Esophagus squamous epithelium (tissue), 5 donors: ENCODE measurements at regions of chr11 and their contacts with region 1.

Region 1: GRCh38 chr11:65013692-65014145 is 241 bp upstream of the ARL2 start:
- DNase-seq: peak; percentile 43
- H3K4me3 ChIP-seq: peak overlapping the region; percentile 73 to 99 (median 96)
- H3K27ac ChIP-seq: peak overlapping the region; percentile 98 to 100 (median 99)
- H3K4me1 ChIP-seq: peaks cover 17 to 38% (median 19%) of the 10 kb centered on the region in 3 donors
- H3K27me3 ChIP-seq: no peaks in the 10 kb centered on the region
- CTCF ChIP-seq: peak in 2 of 6 experiments; percentile 32 to 93
- POLR2A ChIP-seq: peak in 3 of 4 donors; percentile 51 to 62 (median 58)

Region 2: DNA sequence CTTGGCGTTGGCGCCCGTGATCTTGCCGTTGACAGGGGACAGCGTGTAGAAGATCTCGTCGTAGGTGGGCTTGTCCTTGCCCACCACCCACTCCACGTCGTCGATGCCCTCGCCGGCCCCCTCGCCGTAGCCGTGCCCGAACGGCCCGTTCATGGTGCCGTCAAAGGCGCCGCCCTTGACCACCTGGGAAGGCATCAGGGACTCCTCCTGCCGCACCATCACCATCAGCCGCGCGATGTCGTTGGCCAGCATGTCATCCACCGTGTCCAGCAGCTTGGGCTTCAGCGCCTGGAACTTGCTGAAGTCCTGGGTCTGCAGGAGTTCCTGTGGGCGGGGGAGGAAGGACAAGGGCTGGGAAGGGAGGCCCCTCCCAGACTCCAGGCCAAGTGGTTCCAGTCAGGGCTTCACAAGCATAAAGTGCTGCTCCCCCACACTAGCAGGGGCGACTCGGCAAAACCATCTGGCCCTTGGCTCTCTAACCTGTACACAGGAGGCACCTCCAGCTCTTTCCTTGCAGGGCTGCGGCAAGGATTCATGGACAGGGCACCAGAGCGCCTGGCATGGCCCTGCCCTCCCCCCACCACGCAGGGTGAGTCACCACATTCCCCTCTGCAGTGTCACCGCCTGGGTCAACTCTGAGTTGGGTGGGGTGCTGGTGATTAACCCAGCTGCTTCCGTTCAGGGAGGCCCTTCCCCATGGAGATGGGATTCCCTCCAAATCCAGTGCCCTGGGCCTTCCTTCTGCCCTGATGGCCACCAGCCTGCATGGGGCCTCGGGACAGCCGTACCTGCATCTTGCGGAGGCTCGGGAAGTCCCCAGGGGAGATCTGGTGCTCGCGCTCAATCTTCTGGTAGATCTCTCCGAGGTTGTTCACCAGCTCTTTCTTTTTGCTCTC is 158.9 kb before region 1 on chr11:
- intact Hi-C with region 1: loop called (anchors 5 kb)
- DNase-seq: no peak
- H3K4me3 ChIP-seq: peak overlapping the region in 1 of 4 donors; percentile 28
- H3K27ac ChIP-seq: peak overlapping the region; percentile 79 to 94 (median 88)
- H3K4me1 ChIP-seq: peaks cover 56 to 100% (median 87%) of the 10 kb centered on the region in 3 donors
- H3K27me3 ChIP-seq: no peaks in the 10 kb centered on the region
- CTCF ChIP-seq: peak in 1 of 6 experiments; percentile 11
- POLR2A ChIP-seq: no peak

Region 3: GRCh38 chr11:65083834-65084597 is 70.3 kb after region 1 on chr11 and contains the starts of genes CDCA5 and ZFPL1:
- intact Hi-C with region 1: no loop called
- DNase-seq: peak; percentile 63
- H3K4me3 ChIP-seq: peak within 1 kb of the TSS; percentile 44 to 90 (median 79)
- H3K27ac ChIP-seq: peak within 1 kb of the TSS; percentile 90 to 99 (median 97)
- H3K4me1 ChIP-seq: peaks cover 11 to 30% (median 14%) of the 10 kb centered on the region in 3 donors
- H3K27me3 ChIP-seq: no peaks in the 10 kb centered on the region
- CTCF ChIP-seq: peak in 4 of 6 experiments; percentile 7 to 50 (median 14)
- POLR2A ChIP-seq: peak in 2 of 4 donors; percentile 65 to 66
- total RNA-seq, gene CDCA5: 3.1 to 14.3 (median 9.0) TPM
- total RNA-seq, gene ZFPL1: 24.0 to 52.2 (median 32.2) TPM